ENCODE measurements at regions of chr4 and their contacts with region 1.

Region 1: GRCh38 chr4:42519803-42520417 is 122.6 kb downstream of the SHISA3 start:
- DNase-seq: peak; percentile 4 to 34
- ATAC-seq: peak in 1 of 2 experiments; percentile 71; a peak in 3 of 6 replicates
- H3K4me3 ChIP-seq: no peak overlapping the region
- H3K27ac ChIP-seq: no peak overlapping the region
- H3K4me1 ChIP-seq: no peaks in the 10 kb centered on the region
- CTCF ChIP-seq: peak; percentile 61
- EP300 ChIP-seq: no peak
- POLR2A ChIP-seq: no peak
- RAD21 ChIP-seq: peak; percentile 63 to 67; a peak in 4 of 5 replicates

Region 2: DNA sequence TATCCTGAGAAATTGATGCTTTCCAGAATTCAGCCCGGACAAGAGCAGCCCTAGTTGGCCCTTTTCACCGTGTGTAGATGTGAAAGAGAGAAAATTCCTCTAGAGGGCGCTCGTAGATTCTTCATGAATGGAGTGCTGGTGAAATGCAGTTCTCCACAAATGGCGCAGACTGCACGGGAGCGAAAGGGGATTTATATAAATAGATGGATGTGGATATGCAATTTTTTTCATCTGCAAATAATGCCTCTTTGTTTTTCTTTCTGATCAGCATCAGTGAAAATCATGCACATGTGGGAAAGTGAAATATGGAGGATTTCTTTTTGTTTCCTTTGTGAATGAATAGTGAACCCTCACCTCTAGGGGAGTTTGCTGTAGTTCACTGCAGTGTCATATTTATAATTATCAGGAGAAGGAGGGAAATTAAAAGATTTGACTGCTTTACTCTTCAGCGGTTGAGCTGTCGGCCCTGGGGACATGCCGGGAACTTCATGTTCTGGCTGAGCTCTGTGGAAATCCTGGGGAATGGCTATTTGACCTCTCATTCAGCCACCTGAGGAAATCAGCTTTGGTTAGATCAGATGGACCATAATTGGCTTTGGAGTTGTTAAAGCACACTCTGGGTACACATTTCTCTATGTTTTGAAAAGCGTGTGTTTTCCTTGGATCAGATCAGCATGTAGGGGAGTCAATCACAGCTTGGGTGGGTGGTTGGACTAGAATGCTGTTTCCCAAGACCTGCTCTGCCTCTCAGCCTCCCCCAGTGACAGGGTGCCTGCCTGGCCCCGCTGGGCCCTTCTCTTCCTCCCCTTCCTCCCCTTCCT is 237.6 kb before region 1 on chr4:
- CTCF ChIA-PET with region 1: interaction called, 26 read pairs
- POLR2A ChIA-PET with region 1: no interaction called
- DNase-seq: peak; percentile 47 to 63
- ATAC-seq: peak; percentile 93 to 97
- H3K4me3 ChIP-seq: no peak overlapping the region; the same call in 2 of the 3 replicates
- H3K27ac ChIP-seq: no peak overlapping the region
- H3K4me1 ChIP-seq: 0 out of 3 replicates have a peak, but pooled peaks cover 8% of the 10 kb centered on the region
- CTCF ChIP-seq: peak; percentile 62
- EP300 ChIP-seq: no peak
- POLR2A ChIP-seq: no peak
- RAD21 ChIP-seq: peak; percentile 67 to 68; a peak in 4 of 5 replicates

Region 3: GRCh38 chr4:42371306-42372252 is 148.3 kb before region 1 on chr4:
- CTCF ChIA-PET with region 1: interaction called, 42 read pairs
- POLR2A ChIA-PET with region 1: no interaction called
- DNase-seq: peak; percentile 9 to 53
- ATAC-seq: peak in 1 of 2 experiments; percentile 63; a peak in 1 of 6 replicates
- H3K4me3 ChIP-seq: no peak overlapping the region
- H3K27ac ChIP-seq: no peak overlapping the region
- H3K4me1 ChIP-seq: no peaks in the 10 kb centered on the region
- CTCF ChIP-seq: peak; percentile 42
- EP300 ChIP-seq: no peak
- POLR2A ChIP-seq: no peak
- RAD21 ChIP-seq: peak; percentile 40 to 41; a peak in 3 of 5 replicates

Region 4: GRCh38 chr4:42401171-42401570 is 118.7 kb before region 1 on chr4:
- CTCF ChIA-PET with region 1: no interaction called
- POLR2A ChIA-PET with region 1: no interaction called
- DNase-seq: no peak
- ATAC-seq: no peak
- H3K4me3 ChIP-seq: no peak overlapping the region
- H3K27ac ChIP-seq: no peak overlapping the region
- H3K4me1 ChIP-seq: no peaks in the 10 kb centered on the region
- CTCF ChIP-seq: no peak
- EP300 ChIP-seq: no peak
- POLR2A ChIP-seq: no peak
- RAD21 ChIP-seq: no peak

Region 5: DNA sequence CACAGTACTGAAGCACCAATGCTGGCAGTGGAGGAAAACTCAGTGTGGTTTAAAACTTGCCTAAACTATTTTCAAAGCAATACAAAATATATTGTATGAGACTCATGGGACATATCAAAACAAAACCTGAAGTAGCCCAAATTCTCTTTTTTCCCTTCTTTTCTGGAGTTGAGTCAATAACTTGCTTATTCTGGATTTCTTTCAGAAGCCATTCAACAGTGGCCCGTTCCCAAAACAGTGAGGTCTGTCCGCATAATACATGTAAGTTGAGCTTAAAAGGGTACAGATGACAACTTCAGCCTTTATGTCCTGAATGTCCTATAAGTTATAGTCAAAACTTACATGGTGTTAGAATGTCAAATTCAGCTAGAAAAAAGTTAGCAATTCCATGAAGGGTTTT is 21.9 kb before region 1 on chr4:
- CTCF ChIA-PET with region 1: no interaction called
- POLR2A ChIA-PET with region 1: no interaction called
- DNase-seq: no peak
- ATAC-seq: no peak
- H3K4me3 ChIP-seq: no peak overlapping the region
- H3K27ac ChIP-seq: no peak overlapping the region
- H3K4me1 ChIP-seq: no peaks in the 10 kb centered on the region
- CTCF ChIP-seq: no peak
- EP300 ChIP-seq: no peak
- POLR2A ChIP-seq: no peak
- RAD21 ChIP-seq: no peak

Region 6: DNA sequence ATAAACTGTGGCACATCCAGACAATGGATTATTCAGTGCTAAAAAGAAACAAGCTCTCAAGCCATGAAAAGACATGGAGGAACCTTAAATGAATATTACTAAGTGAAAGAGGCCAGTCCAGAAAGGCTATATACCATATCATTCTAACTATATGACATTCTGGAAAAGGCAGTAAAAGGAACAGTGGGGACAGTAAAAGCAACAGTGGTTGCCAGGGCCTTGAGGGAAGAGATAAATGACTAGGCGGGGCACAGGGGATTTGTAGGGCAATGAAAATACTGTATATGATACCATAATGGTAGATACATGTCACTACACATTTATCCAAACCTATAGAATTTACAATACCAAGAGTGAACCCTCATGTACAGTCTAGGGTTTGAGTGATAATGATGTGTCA is 21.7 kb after region 1 on chr4:
- CTCF ChIA-PET with region 1: no interaction called
- POLR2A ChIA-PET with region 1: no interaction called
- DNase-seq: no peak
- ATAC-seq: no peak
- H3K4me3 ChIP-seq: no peak overlapping the region
- H3K27ac ChIP-seq: no peak overlapping the region
- H3K4me1 ChIP-seq: no peaks in the 10 kb centered on the region
- CTCF ChIP-seq: no peak
- EP300 ChIP-seq: no peak
- POLR2A ChIP-seq: no peak
- RAD21 ChIP-seq: no peak

Region 7: DNA sequence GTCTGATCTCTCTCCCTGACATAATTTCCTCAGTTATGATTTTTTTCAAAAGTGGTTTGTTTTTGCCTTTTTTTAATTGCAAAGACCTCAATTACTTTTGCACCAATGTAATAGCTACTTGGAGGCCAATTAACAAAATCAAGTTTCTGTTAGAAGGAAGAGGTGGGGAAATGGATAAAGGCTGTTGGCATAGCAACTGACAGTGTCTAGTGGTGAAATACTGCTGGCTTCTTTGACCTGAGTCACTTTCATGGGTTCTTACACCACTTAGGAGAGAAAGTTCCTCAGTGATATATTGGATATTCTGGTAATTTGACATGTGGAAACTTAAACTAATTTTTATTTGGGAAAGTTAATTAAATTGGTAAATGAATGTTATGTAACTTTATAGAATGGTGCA is 163.5 kb after region 1 on chr4:
- CTCF ChIA-PET with region 1: no interaction called
- POLR2A ChIA-PET with region 1: no interaction called
- DNase-seq: no peak
- ATAC-seq: no peak
- H3K4me3 ChIP-seq: no peak overlapping the region
- H3K27ac ChIP-seq: no peak overlapping the region
- H3K4me1 ChIP-seq: no peaks in the 10 kb centered on the region
- CTCF ChIP-seq: no peak
- EP300 ChIP-seq: no peak
- POLR2A ChIP-seq: no peak
- RAD21 ChIP-seq: no peak

Measured in A549 (cell line).